Psoas muscle (tissue), 8 donors: ENCODE measurements at regions of chr11 and their contacts with region 1.

Region 1: DNA sequence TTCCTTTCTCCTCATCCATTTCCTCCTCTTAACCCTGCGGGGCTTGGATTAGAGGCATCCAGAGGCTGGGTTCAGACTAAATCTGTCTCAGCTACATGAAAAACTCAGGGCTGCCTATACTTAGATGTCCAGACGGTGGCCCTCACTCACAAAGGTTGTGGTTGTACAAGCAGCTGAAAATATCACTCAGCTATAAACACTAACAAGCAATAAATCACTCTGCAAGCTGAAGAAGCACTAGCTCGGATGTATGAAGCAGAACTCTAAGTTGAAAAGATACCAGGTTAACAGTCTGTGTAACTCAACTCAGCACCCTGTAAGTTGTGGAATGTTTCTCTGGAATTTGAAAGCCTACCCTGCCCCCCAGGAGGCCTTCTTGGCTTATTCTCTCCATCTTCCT is 82.9 kb downstream of the EXT2 start:
- DNase-seq: no peak
- ATAC-seq: peak; percentile 71 to 92 (median 86)
- H3K4me3 ChIP-seq: no peak overlapping the region
- H3K27ac ChIP-seq: no peak overlapping the region
- H3K4me1 ChIP-seq: peaks cover 28% of the 10 kb centered on the region
- H3K27me3 ChIP-seq: no peaks in the 10 kb centered on the region
- CTCF ChIP-seq: peak; percentile 39

Region 2: DNA sequence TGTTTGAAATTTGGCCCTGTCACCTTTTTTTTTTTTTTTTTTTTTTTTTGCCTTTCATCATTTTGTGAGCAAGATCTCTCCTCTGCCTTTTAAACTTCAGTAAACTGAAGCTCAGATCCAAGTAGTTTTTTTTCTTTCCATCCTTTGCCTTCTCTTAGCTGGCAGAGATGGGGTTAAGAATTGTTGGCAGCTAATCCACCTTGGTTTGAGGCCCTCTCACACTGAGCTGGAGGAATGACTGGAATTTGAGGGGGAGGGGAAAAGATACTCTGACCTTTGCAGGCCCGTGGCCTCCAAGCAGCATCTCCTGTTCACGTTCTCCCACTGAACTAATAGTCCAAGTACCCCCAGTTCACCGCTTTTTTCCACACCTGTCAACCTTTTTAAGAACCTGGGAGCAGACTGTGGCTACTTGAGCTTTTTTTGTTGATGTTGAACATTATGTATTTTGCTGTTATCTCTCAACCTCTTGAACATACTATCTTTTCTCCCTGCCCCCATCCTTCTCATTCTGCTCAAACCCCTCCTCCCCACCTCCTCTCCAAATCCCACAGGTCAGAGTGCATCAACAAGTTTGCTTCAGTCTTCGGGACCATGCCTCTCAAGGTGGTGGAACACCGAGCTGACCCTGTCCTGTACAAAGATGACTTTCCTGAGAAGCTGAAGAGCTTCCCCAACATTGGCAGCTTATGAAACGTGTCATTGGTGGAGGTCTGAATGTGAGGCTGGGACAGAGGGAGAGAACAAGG is 65.4 kb after region 1 on chr11:
- intact Hi-C with region 1: loop called (anchors 5 to 10 kb)
- DNase-seq: no peak
- ATAC-seq: no peak
- H3K4me3 ChIP-seq: no peak overlapping the region
- H3K27ac ChIP-seq: no peak overlapping the region
- H3K4me1 ChIP-seq: peaks cover 65% of the 10 kb centered on the region
- H3K27me3 ChIP-seq: no peaks in the 10 kb centered on the region
- CTCF ChIP-seq: no peak

Region 3: GRCh38 chr11:44530413-44531115 is 352.2 kb after region 1 on chr11:
- intact Hi-C with region 1: loop called in 1 of 2 experiments (anchors 5 kb)
- DNase-seq: no peak
- ATAC-seq: no peak
- H3K4me3 ChIP-seq: no peak overlapping the region
- H3K27ac ChIP-seq: no peak overlapping the region
- H3K4me1 ChIP-seq: no peaks in the 10 kb centered on the region
- H3K27me3 ChIP-seq: peaks cover 0 to 3% (median 0%) of the 10 kb centered on the region in 3 donors
- CTCF ChIP-seq: no peak